Dendritic cell treated with granulocyte-macrophage colony-stimulating factor and Interleukin-4, amounts not matched to agents 40 ng/mL and 50 ng/mL, for 4 days (primary cell): ENCODE measurements at regions of chr11 and their contacts with region 1.

Region 1: DNA sequence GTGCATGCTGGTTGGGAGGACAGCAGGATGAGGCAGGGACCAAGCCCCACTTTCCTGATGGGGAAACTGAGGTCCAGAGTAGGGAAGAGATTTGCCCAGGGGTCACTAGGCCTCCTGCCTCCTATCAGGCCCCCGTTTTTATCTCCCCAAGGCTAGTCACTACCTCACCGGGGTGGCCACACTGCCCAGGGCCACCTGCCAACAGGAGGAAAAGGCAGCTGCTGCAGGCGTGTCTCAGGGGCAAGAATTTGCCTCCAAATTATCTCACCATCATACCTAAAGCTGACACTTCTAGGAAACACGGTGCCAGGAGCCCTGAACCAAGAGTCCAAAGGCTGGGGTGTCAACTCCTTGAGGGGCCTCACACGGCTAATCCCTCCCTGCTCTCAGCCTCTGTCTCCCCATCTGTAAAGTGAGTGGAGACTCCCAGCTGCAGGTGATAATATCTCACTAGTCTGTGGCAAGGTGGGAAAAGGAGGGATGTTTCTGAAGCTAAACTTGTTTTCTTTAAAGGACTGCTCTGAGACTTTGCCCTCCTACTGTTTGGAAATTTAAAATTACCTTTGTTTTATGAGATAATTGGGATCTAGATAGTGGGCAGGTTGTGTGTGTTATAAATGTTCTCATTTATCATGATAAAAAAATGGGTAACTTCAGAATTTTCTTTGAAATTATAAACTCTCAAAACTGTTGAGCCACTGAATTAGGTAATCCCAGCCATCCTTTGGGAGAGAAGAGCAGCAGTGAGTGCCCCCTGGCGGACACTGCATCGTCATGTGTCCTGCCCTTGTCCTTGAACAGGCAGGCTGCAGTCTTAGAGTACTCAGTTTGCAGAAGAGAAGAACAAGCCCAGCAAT is 60.0 kb downstream of the MYO7A start:
- H3K4me3 Mint-ChIP-seq: no peak overlapping the region
- H3K27ac Mint-ChIP-seq: no peak overlapping the region
- H3K4me1 Mint-ChIP-seq: peaks cover 14% of the 10 kb centered on the region
- H3K27me3 Mint-ChIP-seq: no peaks in the 10 kb centered on the region

Region 2: DNA sequence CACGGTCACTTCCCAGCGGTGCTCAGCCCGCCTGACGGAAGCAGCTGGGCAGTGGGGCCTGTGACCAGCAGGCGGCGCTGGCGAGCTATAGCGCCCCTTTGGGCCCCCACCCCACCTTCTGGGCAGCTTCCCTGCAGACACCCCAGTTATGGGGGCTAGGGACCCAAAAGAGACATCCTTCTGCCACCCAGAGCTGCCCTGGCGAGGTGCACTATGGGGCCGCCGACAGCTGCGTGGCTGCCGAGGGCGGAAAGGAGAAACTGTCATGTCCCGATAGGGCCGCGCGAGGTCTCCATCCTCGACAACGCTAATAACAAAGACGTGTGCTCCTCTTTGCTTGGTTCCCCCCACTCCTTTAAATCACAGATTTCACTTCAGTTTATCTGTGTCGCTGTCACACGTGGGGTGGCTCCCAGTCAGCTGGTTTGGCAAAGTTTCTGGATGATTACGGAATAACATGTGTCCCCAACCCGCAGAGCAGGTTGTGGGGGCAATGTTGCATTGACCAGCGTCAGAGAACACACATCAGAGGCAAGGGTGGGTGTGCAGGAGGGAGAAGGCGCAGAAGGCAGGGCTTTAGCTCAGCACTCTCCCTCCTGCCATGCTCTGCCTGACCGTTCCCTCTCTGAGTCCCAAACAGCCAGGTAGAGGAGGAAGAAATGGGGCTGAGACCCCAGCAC is 60.6 kb before region 1 on chr11:
- intact Hi-C with region 1: loop called (anchors 1 kb)
- H3K4me3 Mint-ChIP-seq: peak overlapping the region; percentile 68
- H3K27ac Mint-ChIP-seq: no peak overlapping the region
- H3K4me1 Mint-ChIP-seq: peaks cover 13% of the 10 kb centered on the region
- H3K27me3 Mint-ChIP-seq: peaks cover 21% of the 10 kb centered on the region